Activated CD8-positive, alpha-beta T cell treated with anti-CD3 and anti-CD28 coated beads, Interleukin-2, amount 10 ng/mL, durations not matched to agents 7 days and 5 days (primary cell): ENCODE measurements at regions of chr7 and their contacts with region 1.

Region 1: DNA sequence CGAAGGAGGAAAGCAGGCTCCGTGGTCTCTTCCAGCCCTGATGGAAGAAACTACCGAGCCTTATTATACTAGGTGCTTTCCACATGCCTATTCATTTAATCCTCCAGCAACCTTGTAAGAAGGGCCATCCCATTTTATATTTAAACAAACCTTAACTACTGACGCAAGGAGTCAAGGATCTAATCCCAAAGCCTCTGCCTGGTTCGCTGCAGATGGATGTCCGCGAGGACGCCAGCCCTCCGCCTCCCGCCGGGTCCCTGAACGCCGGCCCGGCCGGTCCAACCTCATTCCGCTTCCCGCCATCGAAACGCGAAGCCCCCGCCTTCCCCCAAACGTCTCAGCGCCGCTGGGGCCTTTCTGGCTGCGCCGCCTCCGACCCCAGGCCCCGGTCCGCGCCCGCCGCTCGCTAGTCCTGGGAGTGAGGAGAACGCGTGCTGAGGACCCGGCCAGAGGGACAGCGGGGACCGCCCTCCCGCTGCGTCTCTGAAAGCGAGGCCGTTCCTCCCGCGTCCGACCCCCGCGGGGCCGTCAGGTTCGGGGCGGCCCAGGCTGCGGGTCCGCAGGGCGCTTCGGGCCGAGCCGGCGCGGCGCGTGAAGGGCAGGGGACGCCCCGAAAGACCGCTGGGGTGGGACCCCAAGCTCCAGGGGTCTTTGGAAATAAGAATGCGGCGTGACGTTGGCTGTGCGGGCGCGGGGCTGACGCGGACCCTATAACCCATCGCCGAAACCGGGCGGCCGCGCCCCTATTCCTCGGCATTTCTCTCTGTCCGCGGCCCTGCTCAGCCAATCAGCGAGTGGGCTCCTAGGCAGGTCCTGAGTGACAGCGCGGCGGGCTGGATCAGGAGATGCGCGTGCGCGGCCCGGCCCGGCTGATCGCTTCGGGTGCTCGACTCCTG is at the start of gene ATP6V0E2:
- DNase-seq: peak; percentile 96
- ATAC-seq: peak; percentile 89
- H3K4me3 Mint-ChIP-seq: peak within 1 kb of the TSS; percentile 84
- H3K27ac Mint-ChIP-seq: peak within 1 kb of the TSS; percentile 98
- H3K4me1 Mint-ChIP-seq: peaks cover 78% of the 10 kb centered on the region
- H3K27me3 Mint-ChIP-seq: no peaks in the 10 kb centered on the region
- total RNA-seq, gene ATP6V0E2: 92.9 to 99.6 TPM

Region 2: DNA sequence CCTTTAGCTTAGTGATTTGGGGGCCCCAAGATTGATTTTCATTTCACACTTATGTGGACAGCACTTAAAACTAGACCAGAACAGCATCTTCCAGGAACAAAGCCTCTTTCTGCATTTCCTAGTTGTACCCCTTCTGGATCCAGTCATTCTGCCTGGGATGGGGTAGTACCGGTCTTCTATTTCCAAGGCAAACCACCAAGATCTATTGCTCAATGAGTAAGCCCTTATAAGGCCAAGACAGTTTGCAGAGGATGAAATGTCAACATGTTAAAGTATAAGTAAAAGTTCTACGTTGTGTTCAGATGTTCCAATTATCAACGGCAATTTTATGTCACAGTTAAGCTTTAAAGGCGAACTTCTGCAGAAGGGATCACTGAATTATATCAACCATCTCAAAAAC is 268.8 kb before region 1 on chr7:
- CTCF ChIA-PET with region 1: no interaction called
- POLR2A ChIA-PET with region 1: no interaction called
- DNase-seq: no peak
- ATAC-seq: no peak
- H3K4me3 Mint-ChIP-seq: no peak overlapping the region
- H3K27ac Mint-ChIP-seq: no peak overlapping the region
- H3K4me1 Mint-ChIP-seq: peaks cover 22% of the 10 kb centered on the region
- H3K27me3 Mint-ChIP-seq: no peaks in the 10 kb centered on the region

Region 3: GRCh38 chr7:149771721-149772240 is 101.5 kb before region 1 on chr7:
- CTCF ChIA-PET with region 1: no interaction called
- POLR2A ChIA-PET with region 1: no interaction called
- DNase-seq: peak; percentile 88
- ATAC-seq: peak; percentile 97
- H3K4me3 Mint-ChIP-seq: peak overlapping the region; percentile 57
- H3K27ac Mint-ChIP-seq: no peak overlapping the region
- H3K4me1 Mint-ChIP-seq: peaks cover 1% of the 10 kb centered on the region
- H3K27me3 Mint-ChIP-seq: peaks cover 26% of the 10 kb centered on the region

Region 4: DNA sequence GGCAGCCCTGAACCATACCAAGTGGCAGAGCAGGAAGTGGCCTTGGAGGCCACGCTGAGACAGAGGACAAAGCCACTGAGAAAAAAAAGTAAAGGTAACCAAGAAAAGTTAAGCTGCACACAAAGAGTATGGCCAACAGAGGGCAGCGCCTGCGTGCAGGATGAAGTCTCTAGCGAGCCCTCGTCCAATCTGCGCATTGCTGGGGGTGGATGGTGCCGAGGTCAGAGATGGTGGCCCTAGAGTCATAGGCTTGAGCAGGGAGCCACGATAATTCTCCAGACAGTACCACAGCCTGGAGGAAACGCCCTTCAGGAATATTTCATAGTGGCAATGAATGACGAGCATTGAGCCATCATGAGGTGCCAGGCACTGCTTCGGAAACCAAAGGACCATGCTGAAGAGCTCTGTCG is 10.1 kb after region 1 on chr7:
- CTCF ChIA-PET with region 1: interaction called, 14 read pairs
- POLR2A ChIA-PET with region 1: no interaction called
- DNase-seq: peak; percentile 80
- ATAC-seq: peak; percentile 84
- H3K4me3 Mint-ChIP-seq: no peak overlapping the region
- H3K27ac Mint-ChIP-seq: peak overlapping the region; percentile 51
- H3K4me1 Mint-ChIP-seq: peaks cover 23% of the 10 kb centered on the region
- H3K27me3 Mint-ChIP-seq: no peaks in the 10 kb centered on the region